Psoas muscle (tissue), 8 donors: ENCODE measurements at regions of chr14 and their contacts with region 1.

Region 1: GRCh38 chr14:94136575-94137331 is 7.3 kb upstream of the IFI27L2 start:
- DNase-seq: peak; percentile 87 to 92
- ATAC-seq: peak; percentile 90 to 98 (median 94)
- H3K4me3 ChIP-seq: no peak overlapping the region
- H3K27ac ChIP-seq: no peak overlapping the region
- H3K4me1 ChIP-seq: no peaks in the 10 kb centered on the region
- H3K27me3 ChIP-seq: no peaks in the 10 kb centered on the region
- CTCF ChIP-seq: peak; percentile 99

Region 2: GRCh38 chr14:93939304-93940229 is 197.2 kb before region 1 on chr14:
- intact Hi-C with region 1: loop called (anchors 5 to 10 kb)
- DNase-seq: peak; percentile 82 to 92
- ATAC-seq: peak; percentile 52 to 63 (median 56)
- H3K4me3 ChIP-seq: no peak overlapping the region
- H3K27ac ChIP-seq: peak overlapping the region; percentile 98
- H3K4me1 ChIP-seq: peaks cover 77% of the 10 kb centered on the region
- H3K27me3 ChIP-seq: no peaks in the 10 kb centered on the region
- CTCF ChIP-seq: peak; percentile 87

Region 3: DNA sequence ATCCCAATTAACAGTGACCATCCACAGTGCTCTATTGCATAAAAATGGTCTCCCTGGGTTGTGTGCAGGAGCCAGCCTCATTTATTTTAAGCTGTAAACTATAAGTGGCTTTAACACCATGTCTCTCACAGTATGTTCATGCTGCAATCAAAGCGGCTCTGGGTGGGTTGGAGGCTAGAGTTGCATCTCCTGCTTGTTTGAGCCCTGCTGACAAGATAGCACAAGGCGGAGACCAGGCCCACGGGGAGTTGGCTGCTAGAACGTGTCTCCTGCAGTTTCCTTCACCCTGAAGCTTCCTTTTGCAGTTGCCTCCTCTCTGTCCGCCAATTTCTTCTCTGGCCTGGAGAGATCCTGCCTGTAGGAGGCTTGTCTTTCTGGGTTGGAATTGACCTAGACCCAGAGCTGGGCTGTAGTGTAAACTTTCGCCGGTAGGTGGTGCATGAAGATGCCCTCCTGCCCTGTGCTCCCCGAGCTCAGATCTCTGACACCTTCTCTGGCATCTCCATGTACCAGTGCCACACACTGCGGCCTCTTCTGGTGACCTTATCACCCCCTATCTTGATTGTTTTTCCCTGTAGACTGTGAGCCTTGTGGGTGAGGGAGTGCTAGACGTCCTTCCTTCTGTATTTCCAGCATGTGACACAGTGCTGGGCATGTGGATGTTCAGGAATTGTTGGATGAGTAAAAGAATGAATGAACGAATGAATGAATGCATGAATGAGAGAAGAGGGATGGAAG is 100.3 kb before region 1 on chr14:
- intact Hi-C with region 1: loop called (anchors 1 to 2 kb)
- DNase-seq: peak; percentile 67 to 83
- ATAC-seq: peak; percentile 90 to 97 (median 94)
- H3K4me3 ChIP-seq: no peak overlapping the region
- H3K27ac ChIP-seq: no peak overlapping the region
- H3K4me1 ChIP-seq: peaks cover 1% of the 10 kb centered on the region
- H3K27me3 ChIP-seq: no peaks in the 10 kb centered on the region
- CTCF ChIP-seq: peak; percentile 86

Region 4: DNA sequence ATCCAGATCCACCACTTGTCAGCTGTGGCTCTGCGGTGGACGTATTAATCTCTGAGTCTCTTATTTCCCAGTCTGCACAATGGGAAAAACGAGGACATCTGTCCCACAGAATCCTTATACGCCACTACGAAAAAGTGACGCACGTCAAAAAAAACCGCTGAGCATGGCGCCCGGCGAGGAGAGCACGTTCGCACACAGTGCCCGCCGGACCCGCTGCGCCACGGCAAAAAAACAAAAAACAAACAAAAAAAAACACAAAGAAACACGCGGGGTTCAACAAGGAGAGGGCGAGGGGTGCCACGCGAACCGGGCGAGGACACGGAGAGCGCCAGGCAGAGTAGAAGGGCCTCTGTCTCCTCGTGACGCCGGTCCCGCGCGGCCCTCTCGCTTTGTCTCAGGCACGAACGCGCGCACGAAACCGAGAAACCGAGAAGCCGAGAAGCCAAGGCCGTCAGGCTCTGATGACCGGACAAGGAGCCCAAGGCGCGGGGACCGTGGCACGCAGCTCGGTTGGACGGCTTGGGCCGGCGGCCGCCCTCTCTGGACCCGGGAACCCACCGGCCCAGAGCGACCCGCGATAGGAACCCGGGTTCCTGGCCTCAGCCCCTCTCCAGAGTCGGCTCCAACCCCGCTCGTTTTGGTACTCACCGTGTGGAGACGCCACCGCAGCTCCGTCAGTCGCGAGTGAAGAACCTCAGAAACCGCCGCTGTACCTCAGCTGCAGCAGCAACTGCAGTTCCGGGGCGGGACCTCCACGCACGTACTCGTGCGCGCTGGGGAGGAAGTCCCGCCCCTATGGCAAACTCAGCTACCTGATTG is 56.1 kb before region 1 on chr14 and contains the start of gene DDX24:
- intact Hi-C with region 1: loop called in 1 of 2 experiments (anchors 5 kb)
- DNase-seq: peak; percentile 97 to 99
- ATAC-seq: peak; percentile 99 to 100 (median 100)
- H3K4me3 ChIP-seq: peak within 1 kb of the TSS; percentile 87
- H3K27ac ChIP-seq: peak within 1 kb of the TSS; percentile 98
- H3K4me1 ChIP-seq: peaks cover 48% of the 10 kb centered on the region
- H3K27me3 ChIP-seq: no peaks in the 10 kb centered on the region
- CTCF ChIP-seq: no peak
- total RNA-seq, gene DDX24: 145 to 190 (median 171) TPM

Region 5: GRCh38 chr14:94161981-94162380 is 25.2 kb after region 1 on chr14:
- intact Hi-C with region 1: no loop called
- DNase-seq: no peak
- ATAC-seq: no peak
- H3K4me3 ChIP-seq: no peak overlapping the region
- H3K27ac ChIP-seq: no peak overlapping the region
- H3K4me1 ChIP-seq: no peaks in the 10 kb centered on the region
- H3K27me3 ChIP-seq: peaks cover 0 to 9% (median 2%) of the 10 kb centered on the region in 3 donors
- CTCF ChIP-seq: no peak

Region 6: DNA sequence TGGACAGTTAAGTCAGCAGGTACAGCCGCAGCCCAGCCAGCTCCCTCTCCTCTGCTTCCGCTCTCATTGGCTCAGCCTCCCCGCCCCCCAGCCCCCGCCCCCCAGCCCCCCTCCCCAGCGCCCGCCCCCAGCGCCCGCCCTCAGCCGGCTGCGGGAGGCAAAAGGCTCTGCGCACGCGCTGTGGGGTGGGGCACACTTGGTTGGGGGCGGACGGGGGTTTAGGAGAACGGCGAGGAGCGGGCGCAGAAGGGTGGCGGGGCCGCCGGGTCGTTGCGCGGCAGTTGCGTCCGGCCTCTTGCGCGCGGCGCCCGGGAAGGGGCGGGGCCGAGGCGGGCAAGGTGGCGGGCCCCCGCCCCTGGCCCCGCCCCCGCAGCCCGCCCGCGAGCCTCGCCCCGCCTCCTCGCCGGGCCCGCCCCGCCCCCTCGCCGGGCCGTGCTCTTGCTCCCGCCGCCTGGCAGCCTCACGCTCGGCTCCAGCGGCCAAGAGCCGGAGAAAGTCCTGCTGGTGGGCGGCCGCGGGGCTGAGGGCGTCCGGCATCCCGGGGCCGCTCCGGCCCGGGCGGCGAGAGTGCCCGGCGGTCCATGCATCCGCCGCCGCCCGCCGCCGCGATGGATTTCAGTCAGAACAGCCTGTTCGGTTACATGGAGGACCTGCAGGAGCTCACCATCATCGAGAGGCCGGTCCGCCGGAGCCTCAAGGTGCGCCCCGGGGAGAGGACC is 37.3 kb after region 1 on chr14 and contains the start of gene PPP4R4:
- intact Hi-C with region 1: loop called (anchors 2 to 5 kb)
- DNase-seq: peak; percentile 80 to 87
- ATAC-seq: peak; percentile 82 to 92 (median 86)
- H3K4me3 ChIP-seq: peak within 1 kb of the TSS; percentile 80
- H3K27ac ChIP-seq: peak within 1 kb of the TSS; percentile 67
- H3K4me1 ChIP-seq: peaks cover 20% of the 10 kb centered on the region
- H3K27me3 ChIP-seq: peaks cover 0 to 36% (median 3%) of the 10 kb centered on the region in 3 donors
- CTCF ChIP-seq: no peak
- total RNA-seq, gene PPP4R4: 0.13 to 0.73 (median 0.49) TPM in 3 of 4 donors, not detected in the other

Region 7: DNA sequence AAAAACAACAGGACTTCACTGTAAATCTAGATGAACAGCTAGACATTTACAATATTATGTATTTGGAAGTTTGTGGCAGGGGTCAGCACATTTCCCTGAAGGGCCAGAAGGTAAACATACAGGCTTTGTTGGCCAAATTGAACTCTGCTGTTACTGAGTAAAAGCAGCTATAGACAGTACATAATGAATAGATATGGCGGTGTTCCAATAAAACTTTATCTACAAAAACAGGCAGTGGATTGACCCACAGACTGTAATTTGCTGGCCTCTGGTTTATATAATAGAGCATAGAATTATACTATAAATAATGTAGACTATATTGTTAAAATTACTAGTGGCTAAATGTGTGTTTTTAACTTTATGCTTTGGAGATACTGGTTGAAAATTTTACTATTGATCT is 130.6 kb after region 1 on chr14:
- intact Hi-C with region 1: no loop called
- DNase-seq: no peak
- ATAC-seq: no peak
- H3K4me3 ChIP-seq: no peak overlapping the region
- H3K27ac ChIP-seq: no peak overlapping the region
- H3K4me1 ChIP-seq: no peaks in the 10 kb centered on the region
- H3K27me3 ChIP-seq: peaks cover 0 to 11% (median 0%) of the 10 kb centered on the region in 3 donors
- CTCF ChIP-seq: no peak

Region 8: GRCh38 chr14:94485944-94486841 is 349.4 kb after region 1 on chr14:
- intact Hi-C with region 1: loop called in 1 of 2 experiments (anchors 10 kb)
- DNase-seq: peak; percentile 47 to 71
- ATAC-seq: peak; percentile 42 to 85 (median 71)
- H3K4me3 ChIP-seq: no peak overlapping the region
- H3K27ac ChIP-seq: no peak overlapping the region
- H3K4me1 ChIP-seq: no peaks in the 10 kb centered on the region
- H3K27me3 ChIP-seq: peaks cover 0 to 12% (median 2%) of the 10 kb centered on the region in 3 donors
- CTCF ChIP-seq: peak; percentile 83